ENCODE measurements at regions of chr19 and their contacts with region 1.

Region 1: DNA sequence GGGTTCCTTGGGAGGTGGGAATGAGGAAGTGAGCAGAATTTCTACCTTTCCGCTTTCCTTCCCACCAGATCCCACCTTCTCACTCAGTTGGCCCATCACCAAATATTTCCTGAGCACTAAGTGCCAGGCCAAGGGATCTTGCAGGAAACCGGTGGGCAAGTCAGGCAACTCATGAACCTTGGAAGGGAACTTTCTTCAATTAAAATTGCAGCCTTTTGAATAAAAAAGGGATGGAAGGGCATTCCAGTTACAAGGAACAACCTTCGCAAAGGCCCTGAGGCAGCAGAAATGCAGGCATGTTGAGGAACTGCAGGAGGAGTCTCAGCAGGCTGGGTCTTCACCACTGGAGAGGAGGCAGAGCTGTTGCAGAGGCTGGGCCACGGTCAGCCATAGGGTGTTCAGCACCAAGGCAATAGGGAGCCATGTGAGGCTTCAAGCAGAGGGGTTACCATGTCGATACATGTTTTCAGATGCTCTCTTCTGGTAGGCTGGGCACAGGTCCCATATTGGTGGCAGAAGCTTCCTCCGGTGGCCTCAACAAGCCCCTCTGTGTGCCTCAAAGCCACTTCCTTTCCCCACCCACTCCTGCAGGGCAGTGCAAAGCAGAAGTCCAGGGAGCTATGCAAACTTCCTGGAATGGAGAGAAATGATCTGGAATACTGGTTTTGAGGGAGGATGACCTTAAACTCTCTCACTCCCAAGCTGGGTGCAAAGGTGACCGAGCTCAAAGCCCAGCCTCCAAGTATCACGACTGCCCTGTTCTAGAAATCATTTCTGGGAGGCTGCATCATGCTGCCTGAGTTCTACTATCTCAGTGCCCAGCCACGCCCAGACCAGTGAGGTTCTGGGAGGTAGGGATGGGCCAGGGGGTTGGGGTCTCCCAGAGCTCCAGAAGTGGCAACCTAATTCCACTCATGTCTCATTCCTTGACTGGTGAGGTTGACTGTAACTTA is at the start of gene FUT6:
- DNase-seq: no peak
- H3K4me3 ChIP-seq: no peak within 1 kb of the TSS
- H3K27ac ChIP-seq: no peak within 1 kb of the TSS
- H3K4me1 ChIP-seq: no peaks in the 10 kb centered on the region
- H3K27me3 ChIP-seq: no peaks in the 10 kb centered on the region
- CTCF ChIP-seq: no peak
- POLR2A ChIP-seq: no peak
- total RNA-seq, gene FUT6: 0.73 to 4.3 TPM in 2 of 3 donors, not detected in the other

Region 2: GRCh38 chr19:5893901-5894703 is 54.8 kb after region 1 on chr19:
- intact Hi-C with region 1: no loop called
- DNase-seq: peak in 1 of 2 donors; percentile 70
- H3K4me3 ChIP-seq: peak overlapping the region in 1 of 3 donors; percentile 19
- H3K27ac ChIP-seq: peak overlapping the region in 1 of 2 donors; percentile 68
- H3K4me1 ChIP-seq: peaks cover 0 to 8% of the 10 kb centered on the region in 2 donors
- H3K27me3 ChIP-seq: peaks cover 0 to 3% of the 10 kb centered on the region in 2 donors
- CTCF ChIP-seq: no peak
- POLR2A ChIP-seq: no peak

Region 3: DNA sequence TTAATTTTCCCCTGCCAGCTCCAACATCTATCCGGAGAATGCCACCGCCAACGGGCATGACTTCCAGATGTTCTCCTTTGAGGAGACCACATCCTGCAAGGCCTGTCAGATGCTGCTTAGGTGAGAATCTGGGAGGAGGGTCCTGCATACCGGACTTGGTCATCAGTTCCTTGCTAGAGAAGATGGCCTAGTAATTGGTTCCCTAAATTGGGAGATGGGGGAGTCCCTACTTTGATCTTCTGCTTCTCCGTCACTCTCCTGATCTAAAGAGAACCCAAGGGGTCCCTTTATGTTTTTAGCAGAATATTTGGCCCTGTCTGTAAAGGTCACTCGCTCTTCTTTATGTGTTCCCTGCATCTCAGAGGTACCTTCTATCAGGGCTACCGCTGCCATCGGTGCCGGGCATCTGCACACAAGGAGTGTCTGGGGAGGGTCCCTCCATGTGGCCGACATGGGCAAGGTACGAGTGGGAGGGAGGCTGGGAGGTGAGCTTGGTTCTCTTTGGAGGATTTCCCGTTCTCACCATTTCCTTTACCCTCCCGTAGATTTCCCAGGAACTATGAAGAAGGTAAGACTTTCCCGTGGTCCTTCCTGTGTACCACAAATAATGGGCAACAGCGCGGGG is 993.9 kb after region 1 on chr19:
- intact Hi-C with region 1: loop called (anchors 5 kb)
- DNase-seq: no peak
- H3K4me3 ChIP-seq: no peak overlapping the region
- H3K27ac ChIP-seq: no peak overlapping the region
- H3K4me1 ChIP-seq: no peaks in the 10 kb centered on the region
- H3K27me3 ChIP-seq: no peaks in the 10 kb centered on the region
- CTCF ChIP-seq: no peak
- POLR2A ChIP-seq: no peak